Activated CD4-positive, alpha-beta T cell treated with anti-CD3 and anti-CD28 coated beads for 36 hours (primary cell): ENCODE measurements at regions of chr19 and their contacts with region 1.

Region 1: DNA sequence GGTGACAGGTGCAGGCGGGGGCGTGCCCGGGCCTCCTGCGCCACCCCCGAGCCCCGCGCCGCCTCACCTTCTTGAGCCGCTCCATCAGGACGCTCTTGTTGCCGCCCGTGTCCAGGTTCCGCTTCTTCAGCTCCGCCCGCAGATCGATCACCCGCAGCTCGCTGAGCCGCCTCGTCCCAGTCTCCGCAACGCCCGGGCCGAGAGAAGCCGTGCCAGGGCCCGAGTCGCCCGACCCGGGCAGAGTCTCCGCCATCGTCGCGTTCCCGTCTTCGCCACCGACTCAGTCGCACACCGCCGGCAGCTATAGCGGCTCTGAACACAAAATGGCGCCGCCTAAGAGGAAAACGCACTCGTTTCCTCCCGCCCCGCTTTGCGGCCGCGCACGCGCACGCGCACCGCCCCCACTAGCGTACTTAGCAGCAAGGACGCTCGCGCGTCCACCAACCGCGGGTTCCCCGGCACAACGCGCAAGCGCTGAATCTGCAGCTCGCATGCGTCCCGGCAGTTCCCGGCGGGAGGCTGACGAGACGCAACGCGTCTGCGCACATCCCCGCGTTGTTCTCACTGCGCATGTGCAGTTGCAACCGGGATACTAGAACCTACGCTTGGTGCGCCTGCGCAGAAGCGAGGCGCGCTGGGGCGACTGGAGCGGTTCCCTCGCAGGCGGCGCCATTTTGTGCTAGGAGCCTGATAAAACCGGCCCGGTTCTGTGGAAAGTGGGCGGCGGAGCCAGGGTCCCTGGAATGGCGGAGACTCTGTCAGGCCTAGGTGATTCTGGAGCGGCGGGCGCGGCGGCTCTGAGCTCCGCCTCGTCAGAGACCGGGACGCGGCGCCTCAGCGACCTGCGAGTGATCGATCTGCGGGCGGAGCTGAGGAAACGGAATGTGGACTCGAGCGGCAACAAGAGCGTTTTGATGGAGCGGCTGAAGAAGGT is at the starts of genes SAFB and SAFB2:
- DNase-seq: peak; percentile 100
- ATAC-seq: peak; percentile 92
- H3K4me3 Mint-ChIP-seq: peak within 1 kb of the TSS; percentile 100
- H3K27ac Mint-ChIP-seq: peak within 1 kb of the TSS; percentile 100
- H3K4me1 Mint-ChIP-seq: peaks cover 66% of the 10 kb centered on the region
- H3K27me3 Mint-ChIP-seq: no peaks in the 10 kb centered on the region
- total RNA-seq, gene SAFB: 100 to 118 TPM
- total RNA-seq, gene SAFB2: 65.0 to 78.6 TPM

Region 2: GRCh38 chr19:4909897-4910593 is 712.7 kb before region 1 on chr19:
- CTCF ChIA-PET with region 1: no interaction called
- POLR2A ChIA-PET with region 1: no interaction called
- intact Hi-C with region 1: loop called in 1 of 2 experiments (anchors 1 kb)
- DNase-seq: peak; percentile 98
- ATAC-seq: peak; percentile 78
- H3K4me3 Mint-ChIP-seq: peak overlapping the region; percentile 83
- H3K27ac Mint-ChIP-seq: peak overlapping the region; percentile 90
- H3K4me1 Mint-ChIP-seq: peaks cover 42% of the 10 kb centered on the region
- H3K27me3 Mint-ChIP-seq: no peaks in the 10 kb centered on the region

Region 3: DNA sequence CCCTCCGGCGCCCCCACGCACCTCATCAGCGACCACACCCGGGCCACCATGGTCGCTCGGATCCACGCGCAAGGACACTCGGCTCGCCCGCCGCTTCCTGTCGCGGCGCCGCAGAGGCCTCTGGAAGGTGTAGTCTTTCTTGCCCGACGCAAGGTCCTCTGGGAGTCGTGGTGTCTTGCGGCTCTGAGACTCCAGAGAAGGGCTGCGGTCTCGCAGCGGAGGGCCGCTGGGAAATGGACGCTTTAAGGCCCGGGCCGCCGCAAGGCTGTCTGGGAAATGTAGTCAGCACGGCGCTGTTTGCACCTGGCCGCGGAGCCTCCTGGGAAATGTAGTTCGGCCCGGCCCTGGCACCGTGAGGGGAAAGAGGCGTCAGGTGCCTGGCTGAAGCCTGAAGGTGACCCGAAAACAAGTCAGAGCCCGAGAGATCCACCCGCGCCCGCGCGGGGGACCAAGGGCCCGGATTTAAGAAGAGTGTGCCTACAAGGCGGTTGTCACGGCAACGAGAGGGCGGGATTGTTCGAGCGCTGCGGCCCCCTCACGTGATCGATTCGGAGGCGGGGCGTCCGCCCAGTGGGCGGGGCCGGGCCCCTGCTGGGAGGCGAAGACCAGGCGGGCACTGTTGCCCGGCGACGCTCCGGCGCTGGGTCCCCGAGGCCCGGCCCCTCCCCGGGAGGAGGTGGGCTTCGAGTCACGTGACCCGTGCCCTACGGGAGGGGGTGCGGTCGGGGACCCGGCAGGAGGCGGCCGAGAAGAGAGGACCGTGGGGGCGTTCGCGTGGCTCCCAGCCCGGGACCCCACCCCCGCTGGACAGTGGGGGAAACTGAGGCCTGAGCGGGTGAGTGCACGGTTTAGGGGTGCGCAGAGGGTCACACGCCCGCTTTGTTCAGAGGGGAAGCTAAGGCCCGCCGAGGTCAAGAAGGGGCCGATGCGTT is 58.0 kb after region 1 on chr19 and contains the starts of genes HSD11B1L and MICOS13:
- CTCF ChIA-PET with region 1: no interaction called
- POLR2A ChIA-PET with region 1: interaction called, 3 read pairs
- intact Hi-C with region 1: loop called (anchors 1 kb)
- DNase-seq: peak; percentile 99
- ATAC-seq: peak; percentile 97
- H3K4me3 Mint-ChIP-seq: peak within 1 kb of the TSS; percentile 99
- H3K27ac Mint-ChIP-seq: peak within 1 kb of the TSS; percentile 94
- H3K4me1 Mint-ChIP-seq: peaks cover 20% of the 10 kb centered on the region
- H3K27me3 Mint-ChIP-seq: no peaks in the 10 kb centered on the region
- total RNA-seq, gene HSD11B1L: 2.0 to 3.2 TPM
- total RNA-seq, gene MICOS13: 50.9 to 52.1 TPM

Region 4: GRCh38 chr19:5690125-5690954 is 67.6 kb after region 1 on chr19 and contains the start of gene RPL36:
- CTCF ChIA-PET with region 1: interaction called, 7 read pairs
- POLR2A ChIA-PET with region 1: interaction called, 11 read pairs
- intact Hi-C with region 1: loop called in 1 of 2 experiments (anchors 1 kb)
- DNase-seq: peak; percentile 100
- ATAC-seq: peak; percentile 54
- H3K4me3 Mint-ChIP-seq: peak within 1 kb of the TSS; percentile 100
- H3K27ac Mint-ChIP-seq: peak within 1 kb of the TSS; percentile 96
- H3K4me1 Mint-ChIP-seq: peaks cover 21% of the 10 kb centered on the region
- H3K27me3 Mint-ChIP-seq: no peaks in the 10 kb centered on the region
- total RNA-seq, gene RPL36: 1,452 to 1,530 TPM

Region 5: GRCh38 chr19:5814852-5815246 is 192.1 kb after region 1 on chr19:
- CTCF ChIA-PET with region 1: no interaction called
- POLR2A ChIA-PET with region 1: no interaction called
- intact Hi-C with region 1: no loop called
- DNase-seq: no peak
- ATAC-seq: no peak
- H3K4me3 Mint-ChIP-seq: no peak overlapping the region
- H3K27ac Mint-ChIP-seq: no peak overlapping the region
- H3K4me1 Mint-ChIP-seq: no peaks in the 10 kb centered on the region
- H3K27me3 Mint-ChIP-seq: no peaks in the 10 kb centered on the region

Region 6: DNA sequence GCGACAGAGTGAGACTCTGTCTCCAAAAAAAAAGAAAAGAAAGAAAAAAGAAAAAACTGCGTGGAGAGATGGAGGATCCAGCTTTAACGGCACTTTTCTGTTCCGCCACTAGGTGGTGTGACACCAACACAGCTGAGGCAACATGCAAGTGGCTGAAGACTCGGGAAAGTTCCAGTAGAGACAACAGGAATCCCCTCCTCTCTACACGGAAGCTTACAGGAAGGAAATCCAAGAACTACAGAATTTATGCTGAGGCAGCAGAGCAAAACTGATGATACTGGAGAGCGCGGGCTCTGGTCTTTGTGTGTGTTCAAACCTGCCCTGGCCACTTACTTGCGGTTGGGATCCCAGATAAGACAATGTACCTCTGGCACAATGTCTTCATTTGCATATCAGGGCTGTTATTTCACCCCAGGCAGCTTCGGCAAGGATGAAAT is 345.3 kb after region 1 on chr19:
- CTCF ChIA-PET with region 1: no interaction called
- POLR2A ChIA-PET with region 1: no interaction called
- intact Hi-C with region 1: no loop called
- DNase-seq: peak; percentile 80
- ATAC-seq: peak; percentile 89
- H3K4me3 Mint-ChIP-seq: no peak overlapping the region
- H3K27ac Mint-ChIP-seq: peak overlapping the region; percentile 89
- H3K4me1 Mint-ChIP-seq: peaks cover 87% of the 10 kb centered on the region
- H3K27me3 Mint-ChIP-seq: no peaks in the 10 kb centered on the region

Region 7: GRCh38 chr19:6443986-6444385 is 821.3 kb after region 1 on chr19:
- CTCF ChIA-PET with region 1: no interaction called
- POLR2A ChIA-PET with region 1: no interaction called
- intact Hi-C with region 1: no loop called
- DNase-seq: no peak
- ATAC-seq: no peak
- H3K4me3 Mint-ChIP-seq: no peak overlapping the region
- H3K27ac Mint-ChIP-seq: no peak overlapping the region
- H3K4me1 Mint-ChIP-seq: no peaks in the 10 kb centered on the region
- H3K27me3 Mint-ChIP-seq: no peaks in the 10 kb centered on the region